Caco-2 (cell line): ENCODE measurements at regions of chr6 and their contacts with region 1.

Region 1: GRCh38 chr6:56279346-56280080 is 32.1 kb upstream of the COL21A1 start:
- DNase-seq: peak in 1 of 2 experiments; percentile 7
- H3K4me3 ChIP-seq: no peak overlapping the region
- H3K4me3 Mint-ChIP-seq: peak overlapping the region; percentile 16
- H3K27ac Mint-ChIP-seq: no peak overlapping the region
- H3K4me1 ChIP-seq: peaks cover 22% of the 10 kb centered on the region
- H3K4me1 Mint-ChIP-seq: peaks cover 8% of the 10 kb centered on the region
- H3K27me3 ChIP-seq: no peaks in the 10 kb centered on the region
- H3K27me3 Mint-ChIP-seq: no peaks in the 10 kb centered on the region
- CTCF ChIP-seq: no peak

Region 2: DNA sequence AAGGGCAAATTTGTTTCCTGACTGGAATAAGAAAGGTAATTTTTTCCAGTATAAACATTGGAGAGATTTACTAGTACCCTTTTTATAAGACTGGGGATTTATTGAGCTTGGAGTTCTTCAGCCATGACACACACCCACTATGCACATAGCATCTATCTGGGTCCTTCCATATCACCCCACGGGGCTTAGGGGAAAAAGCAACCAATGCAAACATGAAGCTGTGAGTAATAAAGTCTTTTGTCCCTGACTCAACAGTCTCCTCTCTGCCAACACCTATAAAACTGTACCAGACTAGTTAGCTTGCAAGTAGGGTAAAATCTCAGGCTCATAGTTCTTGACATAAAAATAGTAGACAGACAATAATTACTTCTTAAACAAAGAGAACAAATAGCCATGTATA is 55.5 kb before region 1 on chr6:
- CTCF ChIA-PET with region 1: no interaction called
- POLR2A ChIA-PET with region 1: no interaction called
- intact Hi-C with region 1: loop called (anchors 10 kb)
- DNase-seq: no peak
- H3K4me3 ChIP-seq: no peak overlapping the region
- H3K4me3 Mint-ChIP-seq: no peak overlapping the region
- H3K27ac Mint-ChIP-seq: no peak overlapping the region
- H3K4me1 ChIP-seq: no peaks in the 10 kb centered on the region
- H3K4me1 Mint-ChIP-seq: no peaks in the 10 kb centered on the region
- H3K27me3 ChIP-seq: no peaks in the 10 kb centered on the region
- H3K27me3 Mint-ChIP-seq: peaks cover 8% of the 10 kb centered on the region
- CTCF ChIP-seq: no peak

Region 3: GRCh38 chr6:56246881-56247653 is 32.4 kb before region 1 on chr6 and contains the start of gene COL21A1:
- CTCF ChIA-PET with region 1: no interaction called
- POLR2A ChIA-PET with region 1: no interaction called
- intact Hi-C with region 1: loop called (anchors 2 kb)
- DNase-seq: peak; percentile 56 to 64
- H3K4me3 ChIP-seq: peak within 1 kb of the TSS; percentile 32
- H3K4me3 Mint-ChIP-seq: peak within 1 kb of the TSS; percentile 66
- H3K27ac Mint-ChIP-seq: no peak within 1 kb of the TSS
- H3K4me1 ChIP-seq: no peaks in the 10 kb centered on the region
- H3K4me1 Mint-ChIP-seq: no peaks in the 10 kb centered on the region
- H3K27me3 ChIP-seq: no peaks in the 10 kb centered on the region
- H3K27me3 Mint-ChIP-seq: peaks cover 5% of the 10 kb centered on the region
- CTCF ChIP-seq: peak in 1 of 2 experiments; percentile 30
- total RNA-seq, gene COL21A1: 1.2 and 1.3 TPM in 2 replicates